ENCODE measurements at regions of chr10 and their contacts with region 1.

Region 1: DNA sequence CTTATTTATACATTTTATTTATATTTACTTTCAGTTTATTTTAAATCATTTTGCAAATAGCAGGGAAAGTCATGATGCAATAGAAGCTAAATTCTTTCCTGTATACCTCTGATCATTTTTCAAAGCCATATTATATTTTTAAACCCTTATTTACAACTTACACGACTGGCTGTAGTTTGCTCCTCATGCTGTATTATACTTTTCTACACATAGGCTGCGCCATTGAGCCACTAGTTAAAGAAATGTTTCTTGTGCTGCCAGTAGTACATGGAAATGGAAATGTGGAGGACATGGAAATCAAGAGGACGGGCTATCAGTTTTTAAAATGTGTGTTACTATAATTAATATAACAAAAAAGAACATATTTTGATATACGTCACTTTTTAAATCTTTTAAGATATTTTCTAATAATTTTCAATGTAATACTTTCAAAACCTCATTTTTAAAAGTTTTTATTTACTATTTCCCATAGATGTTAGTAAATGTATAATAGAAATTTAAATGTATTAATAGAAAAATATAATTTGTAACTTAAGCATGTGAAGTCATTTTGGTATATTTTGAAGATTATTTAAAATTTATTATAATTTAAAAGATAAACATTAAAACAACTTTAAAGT is 118.5 kb downstream of the VTI1A start:
- DNase-seq: peak; percentile 72
- ATAC-seq: peak; percentile 82
- H3K4me3 ChIP-seq: no peak overlapping the region
- H3K27ac ChIP-seq: no peak overlapping the region
- H3K4me1 ChIP-seq: peaks cover 1% of the 10 kb centered on the region; the same call in 1 of the 2 replicates
- H3K27me3 ChIP-seq: no peaks in the 10 kb centered on the region
- CTCF ChIP-seq: peak; percentile 80
- POLR2A ChIP-seq: no peak
- RAD21 ChIP-seq: peak; percentile 85

Region 2: GRCh38 chr10:112811740-112812551 is 246.4 kb after region 1 on chr10:
- CTCF ChIA-PET with region 1: no interaction called
- POLR2A ChIA-PET with region 1: no interaction called
- dilution Hi-C with region 1: no loop called
- in situ Hi-C with region 1: no loop called
- intact Hi-C with region 1: loop called (anchors 5 kb)
- DNase-seq: peak; percentile 94
- ATAC-seq: peak; percentile 85
- H3K4me3 ChIP-seq: peak overlapping the region; percentile 40
- H3K27ac ChIP-seq: peak overlapping the region; percentile 84
- H3K4me1 ChIP-seq: peaks cover 20% of the 10 kb centered on the region
- H3K27me3 ChIP-seq: no peaks in the 10 kb centered on the region
- CTCF ChIP-seq: no peak
- POLR2A ChIP-seq: no peak
- RAD21 ChIP-seq: no peak

Region 3: DNA sequence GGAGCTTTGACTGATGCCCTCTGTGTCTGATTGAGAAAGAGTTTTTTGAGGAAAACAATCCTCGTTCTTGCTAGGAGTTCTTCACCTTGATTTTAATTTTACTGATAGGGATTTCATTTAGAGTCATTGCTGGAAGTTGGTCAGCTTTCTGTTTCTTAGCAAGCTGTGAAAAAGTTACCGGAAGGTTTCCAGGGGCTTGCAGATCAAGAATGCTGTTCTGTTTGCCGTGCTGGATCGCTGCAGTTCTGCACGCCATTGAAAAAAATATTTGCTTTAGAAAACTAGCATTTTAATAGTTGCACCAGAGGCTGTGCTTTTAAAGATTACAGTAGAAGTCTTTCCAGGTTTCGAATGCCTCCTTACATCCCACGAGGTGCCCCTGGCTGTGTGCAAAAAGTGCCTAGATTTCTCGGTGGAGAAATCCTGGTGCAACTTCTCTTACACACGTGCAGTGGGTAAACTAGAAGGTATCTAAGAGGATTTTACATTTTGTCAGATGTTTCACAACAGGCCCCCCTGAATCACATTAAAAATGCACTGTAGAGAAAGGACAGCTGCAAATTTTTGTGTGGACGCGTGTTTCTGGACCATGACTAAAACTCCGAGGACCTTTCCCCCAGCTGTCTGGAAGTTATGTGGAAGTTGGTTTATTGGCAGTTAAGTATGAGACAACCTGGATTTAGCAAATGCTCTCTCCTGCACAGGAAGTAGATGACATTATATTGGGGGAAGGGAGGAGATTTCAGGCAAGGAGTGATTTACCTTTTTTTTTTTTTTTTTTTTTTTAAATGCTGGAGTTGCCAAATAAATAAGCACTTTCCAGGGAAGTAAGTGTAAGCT is 390.3 kb after region 1 on chr10:
- CTCF ChIA-PET with region 1: no interaction called
- POLR2A ChIA-PET with region 1: no interaction called
- dilution Hi-C with region 1: no loop called
- in situ Hi-C with region 1: no loop called
- intact Hi-C with region 1: loop called (anchors 1 kb)
- DNase-seq: peak; percentile 88
- ATAC-seq: 0 out of 2 replicates have a peak, but pooled peaks have one; percentile 2
- H3K4me3 ChIP-seq: peak overlapping the region; percentile 33
- H3K27ac ChIP-seq: peak overlapping the region; percentile 68
- H3K4me1 ChIP-seq: peaks cover 25% of the 10 kb centered on the region
- H3K27me3 ChIP-seq: no peaks in the 10 kb centered on the region
- CTCF ChIP-seq: no peak
- POLR2A ChIP-seq: no peak
- RAD21 ChIP-seq: no peak

Region 4: GRCh38 chr10:113521123-113521795 is 955.7 kb after region 1 on chr10:
- CTCF ChIA-PET with region 1: no interaction called
- POLR2A ChIA-PET with region 1: no interaction called
- dilution Hi-C with region 1: no loop called
- in situ Hi-C with region 1: no loop called
- intact Hi-C with region 1: loop called (anchors 1 kb)
- DNase-seq: peak; percentile 70
- ATAC-seq: peak; percentile 96
- H3K4me3 ChIP-seq: no peak overlapping the region
- H3K27ac ChIP-seq: no peak overlapping the region
- H3K4me1 ChIP-seq: no peaks in the 10 kb centered on the region
- H3K27me3 ChIP-seq: 0 out of 2 replicates have a peak, but pooled peaks cover 2% of the 10 kb centered on the region
- CTCF ChIP-seq: peak; percentile 95
- POLR2A ChIP-seq: no peak
- RAD21 ChIP-seq: peak; percentile 89